Activated B cell treated with CpG ODN at 0.5 μM for 24 hours (primary cell): ENCODE measurements at regions of chr10 and their contacts with region 1.

Region 1: GRCh38 chr10:99612167-99612831 is 7.9 kb downstream of the SLC25A28 start:
- DNase-seq: peak; percentile 19
- ATAC-seq: peak; percentile 60
- H3K4me3 Mint-ChIP-seq: no peak overlapping the region
- H3K27ac Mint-ChIP-seq: no peak overlapping the region
- H3K4me1 Mint-ChIP-seq: peaks cover 51% of the 10 kb centered on the region
- H3K27me3 Mint-ChIP-seq: no peaks in the 10 kb centered on the region
- CTCF ChIP-seq: peak; percentile 89

Region 2: GRCh38 chr10:99395750-99396445 is 216.4 kb before region 1 on chr10:
- CTCF ChIA-PET with region 1: interaction called, 30 read pairs
- POLR2A ChIA-PET with region 1: no interaction called
- intact Hi-C with region 1: loop called (anchors 1 kb)
- DNase-seq: no peak
- ATAC-seq: no peak
- H3K4me3 Mint-ChIP-seq: no peak overlapping the region
- H3K27ac Mint-ChIP-seq: no peak overlapping the region
- H3K4me1 Mint-ChIP-seq: no peaks in the 10 kb centered on the region
- H3K27me3 Mint-ChIP-seq: peaks cover 2% of the 10 kb centered on the region
- CTCF ChIP-seq: no peak

Region 3: GRCh38 chr10:99560277-99561126 is 51.8 kb before region 1 on chr10:
- CTCF ChIA-PET with region 1: interaction called, 150 read pairs
- POLR2A ChIA-PET with region 1: no interaction called
- intact Hi-C with region 1: loop called (anchors 1 kb)
- DNase-seq: no peak
- ATAC-seq: peak; percentile 31
- H3K4me3 Mint-ChIP-seq: no peak overlapping the region
- H3K27ac Mint-ChIP-seq: no peak overlapping the region
- H3K4me1 Mint-ChIP-seq: peaks cover 24% of the 10 kb centered on the region
- H3K27me3 Mint-ChIP-seq: peaks cover 5% of the 10 kb centered on the region
- CTCF ChIP-seq: peak; percentile 62

Region 4: GRCh38 chr10:99569253-99569939 is 42.9 kb before region 1 on chr10:
- CTCF ChIA-PET with region 1: interaction called, 150 read pairs
- POLR2A ChIA-PET with region 1: interaction called, 3 read pairs
- intact Hi-C with region 1: no loop called
- DNase-seq: no peak
- ATAC-seq: peak; percentile 18
- H3K4me3 Mint-ChIP-seq: no peak overlapping the region
- H3K27ac Mint-ChIP-seq: peak overlapping the region; percentile 85
- H3K4me1 Mint-ChIP-seq: peaks cover 26% of the 10 kb centered on the region
- H3K27me3 Mint-ChIP-seq: no peaks in the 10 kb centered on the region
- CTCF ChIP-seq: no peak

Region 5: DNA sequence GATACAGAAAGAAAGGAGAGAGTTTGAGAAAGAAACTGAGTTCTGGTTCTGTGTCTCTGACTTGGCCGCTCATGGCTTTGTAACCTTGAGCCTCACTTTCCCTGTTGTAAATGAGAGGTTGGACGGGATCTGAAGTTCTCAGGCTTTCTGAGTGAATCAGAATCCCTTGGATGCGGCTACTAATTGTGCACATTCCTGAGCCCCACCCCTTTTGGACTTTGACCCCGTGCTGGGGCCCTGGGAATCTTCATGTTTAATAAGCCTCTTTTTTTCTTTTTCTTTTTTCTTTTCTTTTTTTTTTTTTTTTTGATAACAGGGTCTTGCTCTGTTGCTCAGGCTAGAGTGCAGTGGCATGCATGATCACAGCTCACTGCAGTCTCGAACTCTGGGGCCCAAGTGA is 19.0 kb before region 1 on chr10:
- CTCF ChIA-PET with region 1: no interaction called
- POLR2A ChIA-PET with region 1: no interaction called
- intact Hi-C with region 1: no loop called
- DNase-seq: no peak
- ATAC-seq: no peak
- H3K4me3 Mint-ChIP-seq: no peak overlapping the region
- H3K27ac Mint-ChIP-seq: no peak overlapping the region
- H3K4me1 Mint-ChIP-seq: no peaks in the 10 kb centered on the region
- H3K27me3 Mint-ChIP-seq: no peaks in the 10 kb centered on the region
- CTCF ChIP-seq: no peak

Region 6: DNA sequence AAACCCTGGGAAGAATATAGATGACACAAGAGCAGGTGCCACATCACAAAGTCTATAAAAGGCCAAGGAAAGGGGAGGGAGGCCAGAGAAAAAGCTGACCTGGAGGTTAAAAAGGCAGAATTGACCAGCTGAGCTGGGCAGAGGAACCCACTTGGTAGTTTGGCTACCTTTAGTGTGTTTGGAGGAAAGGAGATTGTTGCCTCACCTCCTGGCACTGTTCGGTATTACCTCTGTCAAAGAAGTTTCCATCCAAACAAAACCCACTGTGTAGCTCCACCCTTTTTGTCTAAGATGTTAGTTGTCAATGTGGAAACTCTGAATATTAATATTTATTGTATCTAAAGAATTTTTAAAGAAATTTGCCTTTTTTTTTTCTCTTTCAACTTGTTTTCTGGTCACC is 70.5 kb after region 1 on chr10:
- CTCF ChIA-PET with region 1: no interaction called
- POLR2A ChIA-PET with region 1: no interaction called
- intact Hi-C with region 1: no loop called
- DNase-seq: no peak
- ATAC-seq: peak; percentile 18
- H3K4me3 Mint-ChIP-seq: no peak overlapping the region
- H3K27ac Mint-ChIP-seq: no peak overlapping the region
- H3K4me1 Mint-ChIP-seq: peaks cover 8% of the 10 kb centered on the region
- H3K27me3 Mint-ChIP-seq: no peaks in the 10 kb centered on the region
- CTCF ChIP-seq: no peak